ENCODE measurements at regions of chr7 and their contacts with region 1.

Region 1: DNA sequence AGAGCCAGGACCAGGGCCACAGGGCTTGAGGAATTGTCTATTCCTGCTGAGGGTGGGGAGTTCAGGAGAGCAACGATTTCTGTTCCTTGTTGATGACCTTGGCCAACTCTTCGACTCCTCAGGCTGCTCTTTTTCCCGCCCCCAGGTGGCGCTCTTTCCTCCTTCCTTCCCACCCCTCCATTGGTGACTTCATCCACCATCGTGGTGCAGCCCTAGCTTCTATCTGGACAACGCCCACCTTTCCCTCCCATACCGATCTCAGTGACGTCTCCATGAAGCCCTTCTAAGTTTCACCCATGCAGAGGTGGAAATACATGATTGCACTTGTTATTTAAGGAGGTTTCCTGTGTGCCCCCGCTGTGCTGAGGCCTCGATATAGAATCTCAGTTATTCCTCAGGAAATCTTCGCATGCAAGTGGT is 22.1 kb upstream of the CARD11 start:
- DNase-seq: peak; percentile 92
- ATAC-seq: peak; percentile 36
- H3K4me3 Mint-ChIP-seq: peak overlapping the region; percentile 42
- H3K27ac Mint-ChIP-seq: peak overlapping the region; percentile 88
- H3K4me1 Mint-ChIP-seq: peaks cover 86% of the 10 kb centered on the region
- H3K27me3 Mint-ChIP-seq: no peaks in the 10 kb centered on the region
- CTCF ChIP-seq: peak; percentile 63

Region 2: DNA sequence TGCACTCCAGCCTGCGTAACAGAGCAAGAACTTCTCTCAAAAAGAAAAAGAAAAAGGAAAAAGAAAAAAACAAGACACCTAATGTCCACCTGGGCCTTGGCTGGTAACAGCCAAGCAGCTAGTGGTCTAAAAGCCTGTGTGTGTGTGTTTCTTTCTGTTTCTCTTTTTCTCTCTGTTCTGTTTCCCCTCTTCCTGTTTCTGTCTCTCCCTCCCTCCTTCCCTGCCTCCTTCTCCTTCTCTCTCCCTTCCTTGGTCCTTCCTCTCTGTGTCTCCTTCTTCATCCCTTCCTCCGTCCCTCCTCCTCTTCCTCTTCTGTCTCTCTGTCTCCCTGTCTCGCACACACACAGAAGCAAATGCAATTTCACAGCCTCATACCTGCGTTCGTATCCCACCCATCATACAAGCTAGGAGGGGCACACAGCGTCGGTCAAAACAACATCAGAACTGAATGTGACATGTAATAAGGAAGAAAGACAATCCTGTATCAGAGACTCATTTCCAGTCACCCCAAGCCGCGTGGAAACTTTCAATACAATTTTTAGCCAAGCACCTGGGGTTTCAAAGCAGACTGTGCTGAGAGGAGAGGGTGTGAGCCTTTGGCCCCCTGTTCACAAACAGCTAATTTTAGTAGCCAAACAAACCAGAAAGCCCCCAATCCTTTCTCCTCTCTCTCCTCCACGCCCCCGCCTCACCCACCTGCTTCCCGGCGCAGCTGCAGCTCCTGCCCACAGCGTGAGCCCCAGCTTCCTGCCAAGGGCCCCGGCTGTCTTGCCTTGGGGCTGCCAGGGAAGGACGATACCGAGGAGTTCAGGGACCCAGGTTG is 171.4 kb before region 1 on chr7:
- CTCF ChIA-PET with region 1: no interaction called
- POLR2A ChIA-PET with region 1: interaction called, 3 read pairs
- intact Hi-C with region 1: loop called (anchors 10 kb)
- DNase-seq: peak; percentile 83
- ATAC-seq: peak; percentile 71
- H3K4me3 Mint-ChIP-seq: peak overlapping the region; percentile 73
- H3K27ac Mint-ChIP-seq: peak overlapping the region; percentile 95
- H3K4me1 Mint-ChIP-seq: peaks cover 20% of the 10 kb centered on the region
- H3K27me3 Mint-ChIP-seq: no peaks in the 10 kb centered on the region
- CTCF ChIP-seq: no peak

Region 3: DNA sequence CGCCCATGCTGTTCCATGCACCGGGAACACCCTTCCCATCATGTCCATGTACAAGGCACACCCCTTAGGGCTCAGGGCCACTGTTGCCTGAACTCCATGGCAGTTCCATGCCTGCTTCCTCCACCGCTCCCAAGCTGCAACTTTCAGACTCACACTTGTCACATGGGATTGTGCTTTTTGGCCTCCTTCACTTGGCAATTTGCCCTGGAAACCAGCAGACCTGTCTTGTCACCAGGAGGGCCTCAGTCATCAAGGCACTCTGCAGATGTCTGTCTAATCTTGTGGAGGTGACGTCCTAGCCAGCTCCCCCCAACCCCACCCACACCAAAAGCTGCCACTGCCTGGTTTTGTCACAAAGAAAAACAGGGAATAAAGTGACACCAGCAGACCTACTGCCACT is 69.6 kb before region 1 on chr7:
- CTCF ChIA-PET with region 1: no interaction called
- POLR2A ChIA-PET with region 1: no interaction called
- intact Hi-C with region 1: no loop called
- DNase-seq: no peak
- ATAC-seq: no peak
- H3K4me3 Mint-ChIP-seq: no peak overlapping the region
- H3K27ac Mint-ChIP-seq: no peak overlapping the region
- H3K4me1 Mint-ChIP-seq: peaks cover 16% of the 10 kb centered on the region
- H3K27me3 Mint-ChIP-seq: no peaks in the 10 kb centered on the region
- CTCF ChIP-seq: no peak

Region 4: DNA sequence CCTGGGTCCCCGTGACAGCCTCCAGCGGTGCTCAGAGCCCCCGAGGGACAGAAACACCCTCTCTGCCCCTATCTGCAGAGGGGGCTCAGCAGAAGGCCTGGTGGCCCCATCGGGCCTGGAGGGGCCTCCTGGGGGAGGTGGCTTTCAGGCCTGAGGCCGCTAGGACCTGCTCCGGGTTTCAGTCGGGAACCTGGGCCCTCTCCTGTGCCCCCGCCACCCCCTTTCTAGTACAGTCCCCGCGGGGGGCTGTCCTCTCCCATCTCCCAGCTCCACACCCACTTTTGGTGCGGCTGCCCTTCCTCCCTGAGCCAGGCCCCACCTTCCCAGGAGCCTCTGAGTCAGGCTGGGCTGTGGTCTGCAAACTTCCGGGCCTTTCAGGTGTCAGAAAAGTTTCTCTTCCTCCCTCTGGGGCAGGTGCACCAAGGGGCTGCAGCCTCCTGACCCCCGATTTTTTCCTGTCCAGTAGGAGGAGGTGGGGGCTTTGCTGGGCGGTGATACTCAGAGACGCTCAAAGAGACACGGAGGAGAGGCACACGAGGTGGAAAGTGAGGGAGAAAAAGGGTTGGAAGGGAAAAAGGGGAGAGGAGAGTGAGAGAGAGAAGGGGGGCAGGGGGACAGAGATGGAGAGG is 22.8 kb before region 1 on chr7:
- CTCF ChIA-PET with region 1: interaction called, 55 read pairs
- POLR2A ChIA-PET with region 1: interaction called, 16 read pairs
- intact Hi-C with region 1: no loop called
- DNase-seq: peak; percentile 88
- ATAC-seq: peak; percentile 73
- H3K4me3 Mint-ChIP-seq: peak overlapping the region; percentile 96
- H3K27ac Mint-ChIP-seq: peak overlapping the region; percentile 96
- H3K4me1 Mint-ChIP-seq: peaks cover 53% of the 10 kb centered on the region
- H3K27me3 Mint-ChIP-seq: no peaks in the 10 kb centered on the region
- CTCF ChIP-seq: no peak

Region 5: GRCh38 chr7:3092468-3092867 is 26.7 kb after region 1 on chr7:
- CTCF ChIA-PET with region 1: interaction called, 101 read pairs
- POLR2A ChIA-PET with region 1: interaction called, 15 read pairs
- intact Hi-C with region 1: no loop called
- DNase-seq: peak; percentile 92
- ATAC-seq: peak; percentile 84
- H3K4me3 Mint-ChIP-seq: peak overlapping the region; percentile 51
- H3K27ac Mint-ChIP-seq: peak overlapping the region; percentile 96
- H3K4me1 Mint-ChIP-seq: peaks cover 64% of the 10 kb centered on the region
- H3K27me3 Mint-ChIP-seq: no peaks in the 10 kb centered on the region
- CTCF ChIP-seq: no peak

Region 6: GRCh38 chr7:3117488-3118231 is 51.9 kb after region 1 on chr7:
- CTCF ChIA-PET with region 1: interaction called, 29 read pairs
- POLR2A ChIA-PET with region 1: interaction called, 4 read pairs
- intact Hi-C with region 1: no loop called
- DNase-seq: peak; percentile 79
- ATAC-seq: peak; percentile 63
- H3K4me3 Mint-ChIP-seq: peak overlapping the region; percentile 80
- H3K27ac Mint-ChIP-seq: peak overlapping the region; percentile 93
- H3K4me1 Mint-ChIP-seq: peaks cover 72% of the 10 kb centered on the region
- H3K27me3 Mint-ChIP-seq: no peaks in the 10 kb centered on the region
- CTCF ChIP-seq: no peak

Region 7: DNA sequence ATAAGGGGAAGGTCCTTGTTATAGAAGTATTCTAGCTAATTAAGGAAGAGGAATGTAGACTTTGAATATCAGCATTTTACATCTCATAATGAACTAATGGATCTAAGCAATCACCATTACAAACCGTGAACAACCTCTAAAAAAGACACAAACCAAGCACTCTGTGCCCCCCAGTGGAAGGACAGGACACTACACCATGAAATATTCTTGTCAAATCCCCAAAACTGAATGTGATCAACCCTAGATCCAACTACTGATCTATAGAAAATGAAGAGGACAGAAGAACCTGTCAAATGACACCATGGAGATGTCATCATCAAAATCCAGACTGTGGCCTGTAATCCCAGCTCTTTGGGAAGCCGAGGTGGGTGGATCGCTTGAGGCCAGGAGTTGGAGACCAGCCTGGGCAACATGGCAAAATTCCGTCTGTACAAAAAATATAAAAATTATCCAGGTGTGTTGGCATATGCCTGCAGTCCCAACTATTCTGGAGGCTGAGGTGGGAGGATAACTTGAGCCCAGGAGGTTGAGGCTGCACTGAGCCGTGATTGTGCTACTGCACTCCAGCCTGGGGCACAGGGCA is 89.3 kb after region 1 on chr7:
- CTCF ChIA-PET with region 1: interaction called, 70 read pairs
- POLR2A ChIA-PET with region 1: interaction called, 3 read pairs
- intact Hi-C with region 1: loop called (anchors 5 kb)
- DNase-seq: peak; percentile 84
- ATAC-seq: peak; percentile 94
- H3K4me3 Mint-ChIP-seq: no peak overlapping the region
- H3K27ac Mint-ChIP-seq: no peak overlapping the region
- H3K4me1 Mint-ChIP-seq: peaks cover 22% of the 10 kb centered on the region
- H3K27me3 Mint-ChIP-seq: no peaks in the 10 kb centered on the region
- CTCF ChIP-seq: peak; percentile 83

Region 8: GRCh38 chr7:3232228-3232627 is 166.5 kb after region 1 on chr7:
- CTCF ChIA-PET with region 1: no interaction called
- POLR2A ChIA-PET with region 1: no interaction called
- intact Hi-C with region 1: no loop called
- DNase-seq: no peak
- ATAC-seq: no peak
- H3K4me3 Mint-ChIP-seq: no peak overlapping the region
- H3K27ac Mint-ChIP-seq: no peak overlapping the region
- H3K4me1 Mint-ChIP-seq: peaks cover 10% of the 10 kb centered on the region
- H3K27me3 Mint-ChIP-seq: peaks cover 3% of the 10 kb centered on the region
- CTCF ChIP-seq: no peak

Region 9: GRCh38 chr7:3244241-3244814 is 178.6 kb after region 1 on chr7:
- CTCF ChIA-PET with region 1: no interaction called
- POLR2A ChIA-PET with region 1: no interaction called
- intact Hi-C with region 1: no loop called
- DNase-seq: no peak
- ATAC-seq: no peak
- H3K4me3 Mint-ChIP-seq: no peak overlapping the region
- H3K27ac Mint-ChIP-seq: no peak overlapping the region
- H3K4me1 Mint-ChIP-seq: no peaks in the 10 kb centered on the region
- H3K27me3 Mint-ChIP-seq: no peaks in the 10 kb centered on the region
- CTCF ChIP-seq: no peak